ENCODE measurements at regions of chr6 and their contacts with region 1.

Region 1: GRCh38 chr6:119541132-119541905 is 191.8 kb upstream of the MAN1A1 start:
- DNase-seq: no peak
- ATAC-seq: 0 out of 3 replicates have a peak, but pooled peaks have one; percentile 12
- H3K4me3 ChIP-seq: no peak overlapping the region
- H3K27ac ChIP-seq: no peak overlapping the region
- H3K4me1 ChIP-seq: peaks cover 3 to 22% of the 10 kb centered on the region in 2 experiments; a peak in 4 of 5 replicates
- H3K27me3 ChIP-seq: no peaks in the 10 kb centered on the region
- CTCF ChIP-seq: no peak
- EP300 ChIP-seq: no peak
- POLR2A ChIP-seq: no peak
- RAD21 ChIP-seq: no peak

Region 2: DNA sequence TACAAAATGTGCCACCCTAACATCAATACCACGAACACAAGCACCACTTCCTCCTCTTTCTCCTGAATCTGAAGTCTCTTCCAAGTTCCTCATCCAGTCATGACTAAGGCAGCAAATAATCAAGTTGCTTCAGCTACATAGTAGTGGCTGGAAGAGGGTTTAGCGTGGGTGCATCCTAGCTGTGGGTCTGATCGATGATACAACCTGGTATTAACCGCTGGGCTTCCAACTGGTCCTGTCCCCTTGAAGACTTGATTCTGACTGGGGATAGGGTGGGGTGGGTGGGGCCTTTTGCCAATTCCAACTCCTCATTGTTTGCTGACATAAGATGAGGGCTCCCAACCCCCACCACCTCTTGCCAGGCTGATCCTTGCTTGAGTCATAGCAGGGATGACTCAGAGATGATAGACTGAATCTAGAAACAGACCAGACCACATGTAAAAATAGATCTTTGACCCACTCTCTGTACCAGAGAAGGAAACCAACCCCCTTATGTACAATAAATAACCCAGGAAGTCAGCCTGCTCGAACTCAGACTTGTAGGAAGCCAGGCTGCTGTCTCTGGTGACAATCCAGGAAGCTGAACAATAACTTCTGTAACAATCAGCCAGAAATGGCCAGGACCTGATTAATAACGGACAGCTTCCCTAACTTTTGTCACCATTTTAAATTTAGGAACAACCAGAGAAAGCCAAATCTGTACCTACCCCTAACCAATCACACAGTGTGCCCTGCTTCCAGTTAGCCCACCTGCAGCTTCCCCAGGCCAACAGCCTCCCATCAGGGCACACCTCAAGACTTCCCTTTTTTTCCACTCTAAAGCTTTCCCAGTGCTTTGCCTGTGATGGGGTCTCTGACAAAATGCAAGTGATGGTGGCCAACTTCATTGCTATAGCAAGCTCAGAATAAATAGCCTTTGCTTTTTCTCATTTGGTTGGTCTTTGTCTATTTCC is 393.9 kb before region 1 on chr6:
- CTCF ChIA-PET with region 1: no interaction called
- POLR2A ChIA-PET with region 1: no interaction called
- in situ Hi-C with region 1: no loop called
- intact Hi-C with region 1: loop called (anchors 5 kb)
- DNase-seq: peak; percentile 89 to 92 (median 91)
- ATAC-seq: peak; percentile 83
- H3K4me3 ChIP-seq: no peak overlapping the region
- H3K27ac ChIP-seq: peak overlapping the region; percentile 85
- H3K4me1 ChIP-seq: peaks cover 23 to 39% of the 10 kb centered on the region in 2 experiments
- H3K27me3 ChIP-seq: no peaks in the 10 kb centered on the region
- CTCF ChIP-seq: no peak
- EP300 ChIP-seq: peak; percentile 87
- POLR2A ChIP-seq: no peak
- RAD21 ChIP-seq: peak in 1 of 2 experiments; percentile 15; a peak in 1 of 4 replicates

Region 3: GRCh38 chr6:119463081-119463626 is 78.2 kb before region 1 on chr6:
- CTCF ChIA-PET with region 1: no interaction called
- POLR2A ChIA-PET with region 1: no interaction called
- in situ Hi-C with region 1: no loop called
- intact Hi-C with region 1: no loop called
- DNase-seq: no peak
- ATAC-seq: no peak
- H3K4me3 ChIP-seq: no peak overlapping the region
- H3K27ac ChIP-seq: no peak overlapping the region
- H3K4me1 ChIP-seq: no peaks in the 10 kb centered on the region
- H3K27me3 ChIP-seq: no peaks in the 10 kb centered on the region
- CTCF ChIP-seq: no peak
- EP300 ChIP-seq: no peak
- POLR2A ChIP-seq: no peak
- RAD21 ChIP-seq: no peak

Region 4: DNA sequence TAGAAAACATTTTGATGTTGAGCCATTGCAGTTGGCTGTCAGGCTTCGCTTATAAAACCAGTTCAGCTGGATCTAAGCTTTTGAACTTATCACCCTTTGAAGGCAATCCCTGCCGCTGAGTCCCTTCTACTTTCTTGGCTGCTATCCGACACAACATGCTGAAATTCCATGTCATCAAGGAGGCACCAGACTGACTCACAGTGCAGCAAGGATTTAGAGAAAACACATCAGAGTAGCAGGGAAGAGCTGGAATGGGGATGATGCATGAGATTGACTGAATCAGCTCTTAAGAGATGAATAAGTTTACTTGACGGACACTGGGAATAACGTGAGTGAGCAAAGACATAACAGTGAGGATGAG is 56.7 kb before region 1 on chr6:
- CTCF ChIA-PET with region 1: no interaction called
- POLR2A ChIA-PET with region 1: no interaction called
- in situ Hi-C with region 1: no loop called
- intact Hi-C with region 1: loop called (anchors 5 kb)
- DNase-seq: no peak
- ATAC-seq: no peak
- H3K4me3 ChIP-seq: no peak overlapping the region
- H3K27ac ChIP-seq: no peak overlapping the region
- H3K4me1 ChIP-seq: peaks cover 6 to 20% of the 10 kb centered on the region in 2 experiments; a peak in 3 of 5 replicates
- H3K27me3 ChIP-seq: no peaks in the 10 kb centered on the region
- CTCF ChIP-seq: no peak
- EP300 ChIP-seq: no peak
- POLR2A ChIP-seq: no peak
- RAD21 ChIP-seq: no peak

Region 5: GRCh38 chr6:120198033-120198432 is 656.7 kb after region 1 on chr6:
- CTCF ChIA-PET with region 1: no interaction called
- POLR2A ChIA-PET with region 1: no interaction called
- in situ Hi-C with region 1: no loop called
- intact Hi-C with region 1: no loop called
- DNase-seq: peak in 1 of 4 experiments; percentile 3
- ATAC-seq: no peak
- H3K4me3 ChIP-seq: no peak overlapping the region
- H3K27ac ChIP-seq: no peak overlapping the region
- H3K4me1 ChIP-seq: no peaks in the 10 kb centered on the region
- H3K27me3 ChIP-seq: no peaks in the 10 kb centered on the region
- CTCF ChIP-seq: no peak
- EP300 ChIP-seq: no peak
- POLR2A ChIP-seq: no peak
- RAD21 ChIP-seq: no peak